Spleen (tissue), 13 donors: ENCODE measurements at regions of chr18 and their contacts with region 1.

Region 1: DNA sequence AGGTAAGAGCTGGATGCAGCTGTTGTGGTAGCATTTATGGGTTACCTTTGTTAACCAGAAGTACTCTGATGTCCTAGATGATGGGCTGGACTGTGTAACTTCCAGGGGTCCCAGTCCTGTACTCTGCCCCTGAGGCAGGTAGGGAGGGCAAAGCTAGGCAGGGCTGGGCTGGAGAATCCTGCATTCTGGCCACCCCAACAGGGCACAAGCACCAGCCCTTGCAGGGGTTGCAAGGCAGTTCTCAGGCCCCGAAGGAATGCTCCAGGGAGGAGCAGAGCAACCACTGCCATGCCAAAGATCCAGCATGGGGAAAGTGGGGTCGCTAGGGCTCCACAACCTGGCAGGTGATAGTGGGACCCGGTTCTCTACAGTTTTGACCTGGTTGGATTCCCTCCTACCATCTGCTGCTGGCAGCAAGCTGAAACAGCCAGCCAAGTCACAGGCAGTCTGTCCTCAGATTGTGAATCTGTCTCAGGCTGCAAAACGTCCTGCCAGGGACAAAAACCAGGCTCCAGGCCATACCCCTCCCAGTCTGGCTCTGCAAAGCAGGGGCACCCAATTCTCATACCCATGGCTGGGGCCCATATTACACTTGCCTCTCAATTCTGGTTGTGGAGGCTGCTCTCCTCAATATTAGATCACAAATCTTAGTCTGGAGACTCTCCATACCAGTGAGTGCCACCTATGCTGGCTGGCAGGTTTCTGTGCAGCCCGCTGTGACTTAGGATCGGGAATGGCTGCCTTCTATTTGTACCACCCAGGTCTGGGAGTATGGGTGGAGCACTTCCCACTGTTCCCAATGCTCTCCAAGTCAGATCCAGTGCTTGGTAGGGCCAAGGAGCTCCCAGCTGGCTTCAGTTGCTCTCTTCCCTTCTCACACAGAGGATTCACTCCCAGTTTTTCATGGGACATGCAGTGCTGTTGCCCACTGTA is 61.1 kb downstream of the SMCHD1 start:
- DNase-seq: peak; percentile 60
- H3K4me3 ChIP-seq: no peak overlapping the region
- H3K27ac ChIP-seq: peak overlapping the region in 1 of 8 donors; percentile 11
- H3K4me1 ChIP-seq: peaks cover 0 to 34% (median 10%) of the 10 kb centered on the region in 6 donors
- H3K27me3 ChIP-seq: no peaks in the 10 kb centered on the region
- CTCF ChIP-seq: no peak
- POLR2A ChIP-seq: no peak

Region 2: GRCh38 chr18:2636126-2636631 is 80.5 kb before region 1 on chr18:
- intact Hi-C with region 1: no loop called
- DNase-seq: no peak
- H3K4me3 ChIP-seq: peak overlapping the region in 3 of 8 donors; percentile 2 to 55 (median 19)
- H3K27ac ChIP-seq: peak overlapping the region; percentile 82 to 100 (median 98)
- H3K4me1 ChIP-seq: peaks cover 26 to 68% (median 53%) of the 10 kb centered on the region in 6 donors
- H3K27me3 ChIP-seq: no peaks in the 10 kb centered on the region
- CTCF ChIP-seq: no peak
- POLR2A ChIP-seq: no peak

Region 3: DNA sequence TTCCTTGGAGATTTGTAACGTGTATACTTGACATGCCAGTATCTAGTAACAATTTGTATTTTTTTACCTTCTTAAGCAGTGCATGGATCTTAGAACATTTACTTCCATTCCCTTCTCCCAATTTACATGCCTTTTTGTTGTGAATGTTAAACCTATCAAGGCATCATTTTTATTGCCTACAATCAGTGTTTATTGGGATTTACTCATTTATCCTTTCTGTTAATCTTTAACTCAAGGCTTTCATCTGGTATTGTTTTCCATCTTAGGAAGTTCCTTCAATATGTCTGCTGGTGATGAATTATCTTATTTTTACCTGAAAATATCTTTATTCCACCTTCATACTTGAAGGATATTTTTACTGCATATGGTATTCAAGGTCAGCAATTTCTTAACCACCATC is 41.6 kb after region 1 on chr18:
- intact Hi-C with region 1: loop called (anchors 10 kb)
- DNase-seq: no peak
- H3K4me3 ChIP-seq: no peak overlapping the region
- H3K27ac ChIP-seq: no peak overlapping the region
- H3K4me1 ChIP-seq: peaks cover 0 to 7% (median 0%) of the 10 kb centered on the region in 6 donors
- H3K27me3 ChIP-seq: no peaks in the 10 kb centered on the region
- CTCF ChIP-seq: no peak
- POLR2A ChIP-seq: no peak

Region 4: GRCh38 chr18:2776601-2777000 is 59.9 kb after region 1 on chr18:
- intact Hi-C with region 1: no loop called
- DNase-seq: no peak
- H3K4me3 ChIP-seq: no peak overlapping the region
- H3K27ac ChIP-seq: no peak overlapping the region
- H3K4me1 ChIP-seq: no peaks in the 10 kb centered on the region
- H3K27me3 ChIP-seq: no peaks in the 10 kb centered on the region
- CTCF ChIP-seq: no peak
- POLR2A ChIP-seq: no peak